Right ventricle myocardium inferior (tissue), 1 donor: ENCODE measurements at regions of chr19 and their contacts with region 1.

Region 1: GRCh38 chr19:6372594-6373095 is at the start of gene ALKBH7:
- DNase-seq: peak; percentile 98
- ATAC-seq: peak; percentile 92
- total RNA-seq, gene ALKBH7: 134 TPM

Region 2: DNA sequence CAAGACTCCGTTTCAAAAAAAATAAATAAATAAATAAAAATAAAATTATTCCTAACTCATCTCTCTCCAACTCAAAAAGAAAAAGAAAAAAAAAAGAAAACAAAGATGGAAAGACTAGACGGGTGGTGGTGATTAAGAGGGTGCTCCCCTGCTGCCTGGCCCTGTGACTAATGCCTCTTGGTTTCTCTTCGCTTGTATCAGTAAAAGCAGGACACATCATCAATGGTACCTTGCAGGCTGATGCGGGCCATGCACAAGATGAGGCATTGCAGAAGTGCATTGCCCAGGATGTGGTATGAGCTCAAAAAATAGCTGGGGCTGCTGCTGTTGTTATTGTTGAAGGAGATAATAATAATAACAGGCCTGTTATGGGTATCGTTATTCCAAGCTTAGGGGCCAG is 53.9 kb before region 1 on chr19:
- intact Hi-C with region 1: no loop called
- DNase-seq: no peak
- ATAC-seq: no peak

Region 3: DNA sequence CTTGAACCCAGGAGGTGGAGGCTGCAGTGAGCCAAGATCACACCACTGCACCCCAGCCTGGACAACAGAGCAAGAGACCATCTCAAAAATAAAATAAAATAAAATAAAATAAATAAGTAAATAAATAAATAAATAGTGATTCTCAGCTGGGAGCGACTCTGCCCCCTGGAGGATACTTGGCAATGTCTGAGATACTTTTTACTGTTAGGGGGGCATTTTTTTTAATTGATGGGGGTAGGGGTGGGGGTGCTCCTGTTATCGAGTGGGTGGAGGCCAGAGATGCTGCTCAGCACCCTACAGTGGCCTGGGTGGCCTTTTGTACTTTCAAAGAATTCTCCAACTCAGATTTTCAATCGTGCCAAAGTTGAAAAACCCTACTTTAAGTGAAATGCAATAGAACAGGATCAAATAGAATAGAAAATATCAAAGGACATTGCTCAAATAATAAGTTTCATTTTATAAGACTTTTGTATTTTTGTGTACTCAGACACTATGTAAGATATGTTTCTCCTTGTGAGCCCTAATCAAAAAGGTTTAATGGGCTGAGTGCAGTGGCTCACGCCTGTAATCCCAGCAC is 18.5 kb before region 1 on chr19:
- intact Hi-C with region 1: no loop called
- DNase-seq: no peak
- ATAC-seq: no peak

Region 4: DNA sequence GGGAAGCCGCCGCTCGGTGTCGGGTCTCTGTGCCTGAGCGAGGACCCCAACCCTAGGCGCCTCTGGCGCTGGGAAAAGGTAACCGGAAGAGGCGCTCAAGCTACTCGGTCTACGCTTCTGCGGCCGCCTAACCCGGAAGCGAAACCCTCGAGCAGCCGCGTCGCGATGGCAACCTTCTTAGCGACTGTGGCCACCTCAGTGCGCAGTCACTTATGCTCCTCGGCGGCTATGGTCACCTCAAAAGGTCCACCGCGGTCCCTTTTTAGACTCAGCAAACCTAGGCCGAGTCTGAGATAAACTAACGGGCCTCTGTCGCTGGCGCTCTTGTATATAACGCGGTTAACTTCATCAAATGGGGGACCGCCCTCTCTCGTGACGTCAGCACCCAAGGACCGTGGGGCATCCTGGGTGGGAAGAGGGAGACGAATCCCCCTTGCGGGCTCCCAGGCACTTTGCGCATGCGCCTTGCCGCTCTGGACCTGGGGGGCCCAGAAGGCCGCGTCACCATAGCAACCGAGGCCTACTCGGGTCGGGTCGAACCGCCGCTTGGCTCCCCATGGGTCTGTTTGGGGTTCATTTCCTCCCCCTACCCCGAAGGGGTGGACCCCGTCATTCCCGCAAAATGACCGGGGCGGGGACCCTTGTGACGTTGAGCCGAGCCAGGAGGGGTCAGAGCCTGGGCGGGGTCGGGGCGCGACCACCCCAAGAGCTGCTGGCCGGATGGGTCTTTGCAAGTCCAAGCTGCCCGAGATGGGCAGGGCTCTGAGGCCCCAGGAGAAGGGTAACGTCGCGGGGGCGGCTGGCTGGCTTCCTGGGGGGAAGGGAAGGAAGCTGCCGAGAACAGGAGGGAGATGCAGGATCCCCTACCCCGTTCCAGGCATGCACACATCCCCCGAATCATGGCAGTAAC is 20.7 kb after region 1 on chr19 and contains the start of gene GTF2F1:
- intact Hi-C with region 1: loop called (anchors 2 kb)
- DNase-seq: peak; percentile 97
- ATAC-seq: peak; percentile 95
- total RNA-seq, gene GTF2F1: 29.6 TPM

Region 5: DNA sequence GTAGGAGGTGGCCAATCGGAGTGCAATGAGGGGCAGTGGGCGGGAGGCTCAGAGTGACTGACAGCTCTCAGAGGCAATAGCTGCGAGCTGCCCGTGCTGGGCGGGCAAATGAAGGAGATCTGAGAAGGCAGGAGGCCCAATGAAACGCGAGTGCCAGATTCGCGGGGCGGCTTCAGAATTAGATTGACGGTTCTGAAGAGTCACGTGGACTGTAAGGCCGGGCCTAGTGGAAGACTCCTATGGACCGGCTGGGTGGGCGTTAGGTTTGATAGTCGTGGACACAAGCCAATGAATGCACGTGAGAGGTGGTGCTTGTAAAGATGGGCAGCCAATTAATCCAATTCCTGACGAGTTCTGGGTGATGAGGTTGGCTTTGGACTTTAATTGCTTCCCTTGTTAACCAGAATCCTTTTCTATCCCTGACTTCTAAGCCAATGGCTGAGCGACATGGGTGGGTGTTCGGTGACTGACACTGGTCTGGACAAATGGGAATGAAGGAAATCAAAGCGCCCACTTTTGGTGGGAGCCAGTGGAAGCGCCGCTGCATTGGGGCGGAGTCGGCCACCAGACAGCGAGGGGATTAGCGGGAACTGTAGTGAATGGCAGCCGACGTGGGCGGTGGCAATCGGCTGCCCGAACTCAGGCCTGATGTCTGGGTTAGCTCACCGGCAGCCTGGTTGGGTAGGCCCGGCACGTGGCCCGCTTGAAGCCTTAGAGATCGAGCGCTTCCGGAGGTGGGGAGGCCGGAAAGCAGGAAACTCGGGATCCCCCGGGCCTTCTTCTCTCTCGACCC is 52.5 kb after region 1 on chr19:
- intact Hi-C with region 1: loop called (anchors 1 kb)
- DNase-seq: peak; percentile 99
- ATAC-seq: peak; percentile 95

Region 6: DNA sequence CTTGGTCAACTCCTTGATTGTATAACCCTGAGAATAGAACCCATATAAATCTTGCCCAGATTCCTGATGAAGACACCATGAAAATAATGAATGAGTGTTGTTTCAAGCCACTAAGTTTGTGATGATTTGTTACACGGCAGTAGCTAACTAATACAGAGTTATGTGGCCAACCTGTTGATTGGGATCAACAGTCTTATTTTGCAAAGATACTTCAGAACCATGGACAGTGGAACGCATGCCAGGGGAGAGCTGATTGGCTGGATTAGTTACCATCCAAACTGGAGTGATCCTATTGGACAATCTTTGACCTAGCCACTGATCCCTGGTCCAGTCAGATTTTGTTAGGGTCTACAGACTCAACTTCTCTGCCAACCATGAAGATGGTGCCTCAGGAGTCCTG is 191.7 kb after region 1 on chr19:
- intact Hi-C with region 1: no loop called
- DNase-seq: no peak
- ATAC-seq: no peak